ENCODE measurements at regions of chr16 and their contacts with region 1.

Region 1: DNA sequence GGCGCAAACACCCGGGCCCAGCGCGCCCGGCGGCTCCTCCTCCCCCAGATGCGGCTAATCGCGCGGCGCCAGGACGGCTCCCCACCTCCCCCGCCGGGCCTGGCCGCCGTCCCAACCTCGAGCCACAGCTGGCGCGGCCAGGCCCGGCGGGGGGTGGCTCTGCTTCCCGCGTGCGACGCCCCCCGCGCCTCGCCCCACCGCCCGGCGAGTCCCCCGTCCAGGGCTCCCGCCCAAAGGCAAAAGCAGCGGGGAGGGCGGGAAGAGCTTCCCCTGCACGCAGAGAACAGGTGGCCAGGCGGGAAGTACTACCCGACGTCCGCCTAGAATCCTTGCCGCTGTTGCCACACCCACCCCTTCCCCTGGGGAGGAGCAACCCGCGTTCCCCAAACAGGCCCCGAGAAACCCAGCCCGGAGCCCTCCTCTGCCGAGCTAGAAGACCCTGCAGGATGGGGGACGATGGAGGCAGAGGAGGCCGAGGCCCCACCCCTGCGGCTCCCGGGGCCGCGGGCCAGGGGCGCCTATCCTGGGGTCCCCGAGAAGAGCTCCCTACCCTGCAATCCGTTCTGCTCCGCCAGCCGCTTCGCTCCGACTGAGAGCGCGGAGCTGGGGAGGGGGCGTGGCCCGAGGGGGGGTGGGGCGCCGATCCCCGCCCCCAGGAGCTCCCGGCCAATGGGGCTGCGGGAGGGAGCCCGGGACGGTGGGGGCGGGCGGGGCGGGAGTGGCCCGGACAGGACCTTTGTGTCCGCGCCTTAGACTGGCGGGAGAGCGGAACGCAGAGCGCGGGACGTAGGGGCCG is at the start of gene CARHSP1:
- DNase-seq: peak; percentile 70 to 81 (median 80)
- H3K4me3 ChIP-seq: peak within 1 kb of the TSS; percentile 77
- H3K4me3 Mint-ChIP-seq: peak within 1 kb of the TSS; percentile 84 to 97 (median 95)
- H3K27ac ChIP-seq: peak within 1 kb of the TSS; percentile 68
- H3K27ac Mint-ChIP-seq: peak within 1 kb of the TSS; percentile 63 to 96 (median 88)
- H3K4me1 ChIP-seq: peaks cover 30% of the 10 kb centered on the region
- H3K4me1 Mint-ChIP-seq: peaks cover 45 to 58% (median 47%) of the 10 kb centered on the region in 3 donors
- H3K27me3 ChIP-seq: no peaks in the 10 kb centered on the region
- H3K27me3 Mint-ChIP-seq: no peaks in the 10 kb centered on the region
- total RNA-seq, gene CARHSP1: 52.6 to 57.8 TPM

Region 2: GRCh38 chr16:8760021-8760420 is 108.6 kb before region 1 on chr16:
- CTCF ChIA-PET with region 1: no interaction called
- POLR2A ChIA-PET with region 1: no interaction called
- DNase-seq: no peak
- H3K4me3 ChIP-seq: no peak overlapping the region
- H3K4me3 Mint-ChIP-seq: no peak overlapping the region
- H3K27ac ChIP-seq: no peak overlapping the region
- H3K27ac Mint-ChIP-seq: no peak overlapping the region
- H3K4me1 ChIP-seq: no peaks in the 10 kb centered on the region
- H3K4me1 Mint-ChIP-seq: no peaks in the 10 kb centered on the region
- H3K27me3 ChIP-seq: no peaks in the 10 kb centered on the region
- H3K27me3 Mint-ChIP-seq: no peaks in the 10 kb centered on the region

Region 3: GRCh38 chr16:8797364-8798173 is 71.0 kb before region 1 on chr16 and contains the starts of genes PMM2 and TMEM186:
- CTCF ChIA-PET with region 1: no interaction called
- POLR2A ChIA-PET with region 1: interaction called, 17 read pairs
- DNase-seq: peak; percentile 94 to 97 (median 95)
- H3K4me3 ChIP-seq: peak within 1 kb of the TSS; percentile 90
- H3K4me3 Mint-ChIP-seq: peak within 1 kb of the TSS; percentile 94 to 99 (median 96)
- H3K27ac ChIP-seq: peak within 1 kb of the TSS; percentile 87
- H3K27ac Mint-ChIP-seq: peak within 1 kb of the TSS; percentile 79 to 96 (median 94)
- H3K4me1 ChIP-seq: peaks cover 34% of the 10 kb centered on the region
- H3K4me1 Mint-ChIP-seq: peaks cover 33 to 66% (median 55%) of the 10 kb centered on the region in 3 donors
- H3K27me3 ChIP-seq: no peaks in the 10 kb centered on the region
- H3K27me3 Mint-ChIP-seq: no peaks in the 10 kb centered on the region
- total RNA-seq, gene PMM2: 58.9 to 63.3 TPM
- total RNA-seq, gene TMEM186: 15.6 to 16.4 TPM

Region 4: GRCh38 chr16:8828541-8829165 is 40.0 kb before region 1 on chr16:
- CTCF ChIA-PET with region 1: no interaction called
- POLR2A ChIA-PET with region 1: no interaction called
- DNase-seq: no peak
- H3K4me3 ChIP-seq: no peak overlapping the region
- H3K4me3 Mint-ChIP-seq: no peak overlapping the region
- H3K27ac ChIP-seq: no peak overlapping the region
- H3K27ac Mint-ChIP-seq: no peak overlapping the region
- H3K4me1 ChIP-seq: no peaks in the 10 kb centered on the region
- H3K4me1 Mint-ChIP-seq: peaks cover 14 to 23% (median 17%) of the 10 kb centered on the region in 3 donors
- H3K27me3 ChIP-seq: no peaks in the 10 kb centered on the region
- H3K27me3 Mint-ChIP-seq: no peaks in the 10 kb centered on the region